Vagina (tissue), 2 donors: ENCODE measurements at regions of chr11 and their contacts with region 1.

Region 1: DNA sequence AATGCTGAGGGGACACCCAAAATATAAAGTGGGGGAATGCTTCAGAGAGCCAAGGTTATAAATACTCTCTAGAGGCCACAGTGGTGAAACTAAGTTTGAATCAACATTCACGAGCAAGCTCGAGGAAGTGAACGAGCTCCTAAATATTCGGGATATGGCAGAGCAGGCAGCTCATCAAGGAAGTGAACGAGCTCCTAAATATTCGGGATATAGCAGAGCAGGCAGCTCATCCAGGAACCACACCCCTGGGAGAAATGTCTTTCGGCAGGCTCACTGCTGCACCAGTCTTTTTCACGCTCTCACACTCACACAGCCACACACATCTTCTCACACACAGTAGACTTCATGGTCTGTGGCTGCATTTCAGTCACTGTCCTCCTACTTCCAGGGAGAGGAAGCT is 787.5 kb downstream of the OPCML start:
- DNase-seq: no peak
- H3K4me3 ChIP-seq: no peak overlapping the region
- H3K27ac ChIP-seq: no peak overlapping the region
- H3K4me1 ChIP-seq: no peaks in the 10 kb centered on the region
- H3K27me3 ChIP-seq: no peaks in the 10 kb centered on the region
- CTCF ChIP-seq: no peak
- POLR2A ChIP-seq: no peak

Region 2: DNA sequence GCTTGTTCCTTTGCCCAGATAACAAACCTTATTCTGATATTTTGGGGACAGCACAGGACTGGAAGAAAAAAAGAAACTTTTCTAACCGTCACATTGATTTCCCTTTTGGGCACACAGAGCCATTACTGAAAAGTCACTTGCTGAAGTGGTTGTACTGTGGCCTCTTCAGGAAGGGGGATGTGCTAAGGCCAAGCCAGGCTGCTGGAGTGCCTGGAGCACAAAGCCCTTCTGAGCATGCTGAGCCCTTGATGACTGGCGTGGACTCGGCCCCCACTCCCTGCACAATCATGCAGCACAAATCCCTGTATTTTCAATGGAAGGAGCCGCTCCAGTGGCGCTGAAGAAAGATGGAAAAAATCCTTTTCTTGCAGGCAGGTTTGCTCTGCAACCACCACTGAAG is 1210.2 kb before region 1 on chr11:
- intact Hi-C with region 1: loop called (anchors 5 kb)
- DNase-seq: no peak
- H3K4me3 ChIP-seq: no peak overlapping the region
- H3K27ac ChIP-seq: no peak overlapping the region
- H3K4me1 ChIP-seq: no peaks in the 10 kb centered on the region
- H3K27me3 ChIP-seq: no peaks in the 10 kb centered on the region
- CTCF ChIP-seq: no peak
- POLR2A ChIP-seq: no peak

Region 3: GRCh38 chr11:132430429-132431062 is 314.2 kb before region 1 on chr11:
- intact Hi-C with region 1: no loop called
- DNase-seq: no peak
- H3K4me3 ChIP-seq: no peak overlapping the region
- H3K27ac ChIP-seq: no peak overlapping the region
- H3K4me1 ChIP-seq: no peaks in the 10 kb centered on the region
- H3K27me3 ChIP-seq: no peaks in the 10 kb centered on the region
- CTCF ChIP-seq: no peak
- POLR2A ChIP-seq: no peak

Region 4: DNA sequence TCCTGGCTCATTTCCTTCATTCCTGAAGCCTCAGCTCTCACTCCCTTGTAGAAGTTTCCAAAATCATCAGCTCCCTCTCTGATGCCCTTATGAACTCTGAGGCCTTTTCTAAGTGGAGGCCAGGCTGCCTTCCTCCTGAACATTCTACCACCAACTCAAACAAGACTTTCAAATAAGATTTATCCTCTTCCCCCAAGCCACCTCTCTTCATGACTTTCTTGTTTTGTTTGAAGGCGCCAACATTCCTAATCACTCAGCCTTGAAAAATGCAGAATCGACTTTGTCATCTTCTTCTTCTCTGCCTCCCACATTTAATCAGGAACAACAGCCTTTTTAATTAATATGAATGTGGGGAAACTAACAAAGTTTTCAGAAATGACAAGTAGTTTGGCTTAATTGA is 140.3 kb before region 1 on chr11:
- intact Hi-C with region 1: no loop called
- DNase-seq: no peak
- H3K4me3 ChIP-seq: no peak overlapping the region
- H3K27ac ChIP-seq: no peak overlapping the region
- H3K4me1 ChIP-seq: no peaks in the 10 kb centered on the region
- H3K27me3 ChIP-seq: no peaks in the 10 kb centered on the region
- CTCF ChIP-seq: no peak
- POLR2A ChIP-seq: no peak